Testis (tissue), 5 donors: ENCODE measurements at regions of chrX and their contacts with region 1.

Region 1: DNA sequence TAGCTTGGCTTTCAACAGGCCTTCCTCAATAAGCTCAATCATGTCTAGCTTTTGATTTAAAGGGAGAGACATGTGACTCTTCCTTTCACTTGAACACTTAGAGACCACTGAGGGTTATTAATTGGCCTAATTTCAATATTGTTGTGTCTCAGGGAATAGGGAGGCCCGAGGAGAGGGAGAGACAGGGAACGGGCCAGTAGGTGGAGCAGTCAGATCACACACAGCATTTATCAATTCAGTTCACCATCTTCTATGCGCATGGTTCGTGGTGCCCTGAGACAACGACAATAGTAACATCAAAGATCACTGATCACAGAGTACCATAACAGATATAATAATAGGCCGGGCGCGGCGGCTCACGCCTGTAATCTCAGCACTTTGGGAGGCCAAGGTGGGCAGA is 17.8 kb downstream of the ZNF81 start:
- DNase-seq: peak; percentile 67
- H3K4me3 ChIP-seq: no peak overlapping the region
- H3K27ac ChIP-seq: no peak overlapping the region
- H3K4me1 ChIP-seq: no peaks in the 10 kb centered on the region
- H3K27me3 ChIP-seq: no peaks in the 10 kb centered on the region
- CTCF ChIP-seq: peak; percentile 29 to 54 (median 39)
- POLR2A ChIP-seq: no peak

Region 2: DNA sequence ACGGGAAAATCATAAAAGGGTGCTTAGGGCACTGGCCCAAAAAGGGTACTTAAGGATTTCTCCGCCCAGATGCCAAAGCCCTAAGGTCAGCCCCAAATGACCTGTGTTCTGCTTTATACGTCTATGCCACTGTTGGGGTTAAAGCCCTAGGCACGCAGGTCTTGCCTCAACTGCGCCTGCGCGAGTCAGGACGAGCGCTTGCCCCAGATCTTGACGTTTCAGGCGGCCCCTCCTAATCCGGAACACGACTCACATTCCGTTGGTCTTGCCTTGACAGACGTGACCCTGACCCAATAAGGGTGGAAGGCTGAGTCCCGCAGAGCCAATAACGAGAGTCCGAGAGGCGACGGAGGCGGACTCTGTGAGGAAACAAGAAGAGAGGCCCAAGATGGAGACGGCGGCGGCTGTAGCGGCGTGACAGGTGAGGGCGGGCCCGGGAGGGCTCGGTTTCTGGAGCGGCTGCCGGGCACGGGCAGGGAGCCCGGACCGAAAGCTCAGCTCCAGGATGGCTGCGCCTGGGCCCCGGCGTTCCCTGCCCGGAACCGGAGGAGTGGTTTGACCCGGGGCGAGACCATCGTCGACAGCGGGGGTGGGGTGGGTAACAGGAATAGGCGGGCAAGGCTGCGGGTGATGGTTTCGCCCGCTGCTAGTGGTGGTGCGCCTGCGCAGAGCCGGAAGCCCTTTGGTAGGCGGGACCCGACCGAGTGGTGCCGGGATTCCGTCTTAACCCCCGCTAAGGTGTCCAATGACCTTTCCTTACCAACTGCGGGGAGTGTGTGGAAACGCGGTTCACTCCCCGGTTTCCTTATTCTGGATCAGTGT is 293.4 kb before region 1 on chrX and contains the start of gene ARAF:
- intact Hi-C with region 1: loop called (anchors 10 kb)
- DNase-seq: peak; percentile 97
- H3K4me3 ChIP-seq: peak within 1 kb of the TSS; percentile 61 to 77
- H3K27ac ChIP-seq: peak within 1 kb of the TSS; percentile 97 to 98
- H3K4me1 ChIP-seq: no peaks in the 10 kb centered on the region
- H3K27me3 ChIP-seq: no peaks in the 10 kb centered on the region
- CTCF ChIP-seq: no peak
- POLR2A ChIP-seq: no peak
- total RNA-seq, gene ARAF: 29.8 to 44.3 TPM

Region 3: GRCh38 chrX:47991263-47992092 is 137.0 kb after region 1 on chrX:
- intact Hi-C with region 1: no loop called
- DNase-seq: no peak
- H3K4me3 ChIP-seq: no peak overlapping the region
- H3K27ac ChIP-seq: no peak overlapping the region
- H3K4me1 ChIP-seq: no peaks in the 10 kb centered on the region
- H3K27me3 ChIP-seq: no peaks in the 10 kb centered on the region
- CTCF ChIP-seq: no peak
- POLR2A ChIP-seq: no peak

Region 4: GRCh38 chrX:48021026-48021900 is 166.8 kb after region 1 on chrX:
- intact Hi-C with region 1: loop called (anchors 10 kb)
- DNase-seq: peak; percentile 85
- H3K4me3 ChIP-seq: peak overlapping the region; percentile 55 to 69
- H3K27ac ChIP-seq: peak overlapping the region; percentile 90 to 92
- H3K4me1 ChIP-seq: no peaks in the 10 kb centered on the region
- H3K27me3 ChIP-seq: no peaks in the 10 kb centered on the region
- CTCF ChIP-seq: peak in 1 of 3 experiments; percentile 7
- POLR2A ChIP-seq: no peak